Heart left ventricle (tissue), 16 donors: ENCODE measurements at regions of chr12 and their contacts with region 1.

Region 1: GRCh38 chr12:104740668-104741067 is 217.4 kb downstream of the SLC41A2 start:
- DNase-seq: peak in 1 of 5 donors; percentile 34
- ATAC-seq: peak; percentile 43 to 72 (median 56)
- H3K4me3 ChIP-seq: no peak overlapping the region
- H3K27ac ChIP-seq: peak overlapping the region in 3 of 12 donors; percentile 36 to 84 (median 50)
- H3K4me1 ChIP-seq: peaks cover 0 to 70% (median 8%) of the 10 kb centered on the region in 12 donors
- H3K27me3 ChIP-seq: no peaks in the 10 kb centered on the region
- CTCF ChIP-seq: no peak
- POLR2A ChIP-seq: no peak

Region 2: GRCh38 chr12:104865080-104865479 is 124.4 kb after region 1 on chr12:
- intact Hi-C with region 1: loop called in 2 of 10 experiments (anchors 10 kb)
- DNase-seq: no peak
- ATAC-seq: no peak
- H3K4me3 ChIP-seq: no peak overlapping the region
- H3K27ac ChIP-seq: no peak overlapping the region
- H3K4me1 ChIP-seq: peaks cover 0 to 26% (median 7%) of the 10 kb centered on the region in 12 donors
- H3K27me3 ChIP-seq: no peaks in the 10 kb centered on the region
- CTCF ChIP-seq: no peak
- POLR2A ChIP-seq: no peak